K562 (cell line): ENCODE measurements at regions of chr19 and their contacts with region 1.

Region 1: GRCh38 chr19:3035542-3036118 is 6.5 kb upstream of the TLE2 start:
- DNase-seq: peak; percentile 99 to 100 (median 99)
- ATAC-seq: peak; percentile 92
- H3K4me3 ChIP-seq: peak overlapping the region; percentile 61
- H3K27ac ChIP-seq: peak overlapping the region; percentile 90
- H3K4me1 ChIP-seq: peaks cover 35 to 46% of the 10 kb centered on the region in 2 experiments
- H3K27me3 ChIP-seq: no peaks in the 10 kb centered on the region
- CTCF ChIP-seq: no peak; a peak in 1 of 6 replicates
- EP300 ChIP-seq: no peak
- POLR2A ChIP-seq: peak; percentile 83
- RAD21 ChIP-seq: no peak

Region 2: GRCh38 chr19:2977001-2977685 is 58.5 kb before region 1 on chr19 and contains the start of gene TLE6:
- CTCF ChIA-PET with region 1: no interaction called
- POLR2A ChIA-PET with region 1: interaction called, 3 read pairs
- in situ Hi-C with region 1: no loop called
- intact Hi-C with region 1: loop called (anchors 1 kb)
- DNase-seq: peak; percentile 98 to 99 (median 99)
- ATAC-seq: peak; percentile 99
- H3K4me3 ChIP-seq: peak within 1 kb of the TSS; percentile 49
- H3K27ac ChIP-seq: peak within 1 kb of the TSS; percentile 73
- H3K4me1 ChIP-seq: peaks cover 15 to 39% of the 10 kb centered on the region in 2 experiments
- H3K27me3 ChIP-seq: no peaks in the 10 kb centered on the region
- CTCF ChIP-seq: no peak
- EP300 ChIP-seq: no peak
- POLR2A ChIP-seq: peak; percentile 70
- RAD21 ChIP-seq: no peak
- polyA plus RNA-seq, gene TLE6: 1.2 to 1.5 TPM

Region 3: GRCh38 chr19:3024870-3025550 is 10.6 kb before region 1 on chr19:
- CTCF ChIA-PET with region 1: no interaction called
- POLR2A ChIA-PET with region 1: interaction called, 12 read pairs
- in situ Hi-C with region 1: no loop called
- intact Hi-C with region 1: no loop called
- DNase-seq: peak in 2 of 4 experiments; percentile 24 to 48
- ATAC-seq: peak; percentile 19
- H3K4me3 ChIP-seq: no peak overlapping the region
- H3K27ac ChIP-seq: no peak overlapping the region
- H3K4me1 ChIP-seq: peaks cover 20 to 38% of the 10 kb centered on the region in 2 experiments
- H3K27me3 ChIP-seq: no peaks in the 10 kb centered on the region
- CTCF ChIP-seq: no peak
- EP300 ChIP-seq: no peak
- POLR2A ChIP-seq: no peak
- RAD21 ChIP-seq: no peak

Region 4: GRCh38 chr19:3054972-3055740 is 19.5 kb after region 1 on chr19:
- CTCF ChIA-PET with region 1: no interaction called
- POLR2A ChIA-PET with region 1: interaction called, 18 read pairs
- in situ Hi-C with region 1: no loop called
- intact Hi-C with region 1: no loop called
- DNase-seq: peak in 2 of 4 experiments; percentile 17 to 19
- ATAC-seq: no peak
- H3K4me3 ChIP-seq: no peak overlapping the region
- H3K27ac ChIP-seq: no peak overlapping the region
- H3K4me1 ChIP-seq: peaks cover 21 to 52% of the 10 kb centered on the region in 2 experiments; a peak in 4 of 5 replicates
- H3K27me3 ChIP-seq: no peaks in the 10 kb centered on the region
- CTCF ChIP-seq: no peak
- EP300 ChIP-seq: no peak
- POLR2A ChIP-seq: no peak
- RAD21 ChIP-seq: no peak

Region 5: GRCh38 chr19:3075895-3076431 is 40.3 kb after region 1 on chr19:
- CTCF ChIA-PET with region 1: no interaction called
- POLR2A ChIA-PET with region 1: interaction called, 3 read pairs
- in situ Hi-C with region 1: no loop called
- intact Hi-C with region 1: loop called (anchors 5 kb)
- DNase-seq: peak; percentile 75 to 86 (median 81)
- ATAC-seq: peak; percentile 74
- H3K4me3 ChIP-seq: no peak overlapping the region
- H3K27ac ChIP-seq: no peak overlapping the region
- H3K4me1 ChIP-seq: peaks cover 8 to 17% of the 10 kb centered on the region in 2 experiments; a peak in 3 of 5 replicates
- H3K27me3 ChIP-seq: no peaks in the 10 kb centered on the region
- CTCF ChIP-seq: peak; percentile 85 to 92 (median 91)
- EP300 ChIP-seq: no peak
- POLR2A ChIP-seq: no peak
- RAD21 ChIP-seq: peak; percentile 82 to 85

Region 6: GRCh38 chr19:3108775-3109174 is 73.1 kb after region 1 on chr19:
- CTCF ChIA-PET with region 1: no interaction called
- POLR2A ChIA-PET with region 1: no interaction called
- in situ Hi-C with region 1: no loop called
- intact Hi-C with region 1: no loop called
- DNase-seq: peak; percentile 64 to 84 (median 72)
- ATAC-seq: peak; percentile 93
- H3K4me3 ChIP-seq: no peak overlapping the region
- H3K27ac ChIP-seq: peak overlapping the region; percentile 29; the same call in 1 of the 3 replicates
- H3K4me1 ChIP-seq: peaks cover 2 to 78% of the 10 kb centered on the region in 2 experiments; a peak in 3 of 5 replicates
- H3K27me3 ChIP-seq: no peaks in the 10 kb centered on the region
- CTCF ChIP-seq: peak; percentile 78 to 97 (median 81)
- EP300 ChIP-seq: no peak
- POLR2A ChIP-seq: no peak
- RAD21 ChIP-seq: peak; percentile 38 to 67; a peak in 3 of 4 replicates